ENCODE measurements at regions of chr12 and their contacts with region 1.

Region 1: GRCh38 chr12:15220994-15221885 is at the start of gene RERG:
- DNase-seq: peak; percentile 74
- ATAC-seq: peak; percentile 100
- H3K4me3 Mint-ChIP-seq: peak within 1 kb of the TSS; percentile 53
- H3K27ac Mint-ChIP-seq: no peak within 1 kb of the TSS
- H3K4me1 Mint-ChIP-seq: peaks cover 9% of the 10 kb centered on the region
- H3K27me3 Mint-ChIP-seq: peaks cover 63% of the 10 kb centered on the region
- total RNA-seq, gene RERG: not detected

Region 2: DNA sequence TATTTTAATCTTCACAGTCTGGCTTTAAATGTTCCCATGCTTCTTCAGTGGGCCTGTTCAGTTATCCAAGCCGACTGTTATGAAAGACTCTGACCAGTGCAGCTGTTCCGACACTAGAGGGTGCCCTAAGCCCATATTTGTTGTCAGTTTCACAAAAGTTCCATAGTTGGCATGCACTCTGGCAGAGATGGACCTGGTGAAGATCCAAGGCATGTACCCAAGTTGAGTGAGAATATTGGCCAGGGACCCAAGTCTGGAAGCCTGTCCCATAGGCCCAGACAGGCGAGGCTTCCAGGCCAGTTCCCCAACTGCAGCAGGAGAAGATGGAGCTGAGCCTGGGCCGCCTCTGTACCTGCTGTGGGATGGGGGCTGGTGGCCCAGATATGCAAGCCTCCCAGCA is 497.5 kb before region 1 on chr12:
- CTCF ChIA-PET with region 1: interaction called, 12 read pairs
- DNase-seq: peak; percentile 65
- ATAC-seq: peak; percentile 64
- H3K4me3 Mint-ChIP-seq: no peak overlapping the region
- H3K27ac Mint-ChIP-seq: no peak overlapping the region
- H3K4me1 Mint-ChIP-seq: peaks cover 3% of the 10 kb centered on the region
- H3K27me3 Mint-ChIP-seq: peaks cover 16% of the 10 kb centered on the region

Region 3: GRCh38 chr12:15151161-15152120 is 69.8 kb before region 1 on chr12:
- CTCF ChIA-PET with region 1: interaction called, 12 read pairs
- DNase-seq: no peak
- ATAC-seq: no peak
- H3K4me3 Mint-ChIP-seq: no peak overlapping the region
- H3K27ac Mint-ChIP-seq: no peak overlapping the region
- H3K4me1 Mint-ChIP-seq: no peaks in the 10 kb centered on the region
- H3K27me3 Mint-ChIP-seq: peaks cover 8% of the 10 kb centered on the region

Region 4: GRCh38 chr12:15172060-15172822 is 49.0 kb before region 1 on chr12:
- CTCF ChIA-PET with region 1: interaction called, 10 read pairs
- DNase-seq: no peak
- ATAC-seq: no peak
- H3K4me3 Mint-ChIP-seq: no peak overlapping the region
- H3K27ac Mint-ChIP-seq: no peak overlapping the region
- H3K4me1 Mint-ChIP-seq: no peaks in the 10 kb centered on the region
- H3K27me3 Mint-ChIP-seq: peaks cover 32% of the 10 kb centered on the region

Region 5: DNA sequence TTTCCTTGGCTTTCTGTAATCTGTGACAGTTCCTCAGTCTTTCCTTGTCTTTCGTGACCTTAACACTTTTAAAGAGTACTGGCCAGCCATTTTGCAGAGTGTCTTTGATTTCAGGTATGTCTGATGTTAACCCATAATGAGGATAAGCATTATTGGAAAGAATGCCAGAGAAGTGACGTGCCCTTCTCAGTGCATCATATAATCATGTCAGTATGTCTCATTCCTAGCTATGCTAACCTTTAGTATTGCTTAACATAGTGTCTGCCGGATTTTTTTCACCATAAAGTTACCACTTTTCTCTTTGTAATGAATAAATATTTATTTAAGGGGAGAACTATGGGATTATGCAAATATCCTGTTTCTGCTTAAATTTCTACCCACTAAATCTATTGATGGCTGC is 28.5 kb before region 1 on chr12:
- CTCF ChIA-PET with region 1: interaction called, 19 read pairs
- DNase-seq: no peak
- ATAC-seq: no peak
- H3K4me3 Mint-ChIP-seq: no peak overlapping the region
- H3K27ac Mint-ChIP-seq: no peak overlapping the region
- H3K4me1 Mint-ChIP-seq: no peaks in the 10 kb centered on the region
- H3K27me3 Mint-ChIP-seq: peaks cover 17% of the 10 kb centered on the region

Region 6: GRCh38 chr12:15276088-15276698 is 55.0 kb after region 1 on chr12:
- CTCF ChIA-PET with region 1: interaction called, 13 read pairs
- DNase-seq: no peak
- ATAC-seq: no peak
- H3K4me3 Mint-ChIP-seq: no peak overlapping the region
- H3K27ac Mint-ChIP-seq: no peak overlapping the region
- H3K4me1 Mint-ChIP-seq: peaks cover 16% of the 10 kb centered on the region
- H3K27me3 Mint-ChIP-seq: peaks cover 2% of the 10 kb centered on the region

Region 7: GRCh38 chr12:15364221-15365160 is 143.3 kb after region 1 on chr12:
- CTCF ChIA-PET with region 1: no interaction called
- DNase-seq: no peak
- ATAC-seq: no peak
- H3K4me3 Mint-ChIP-seq: no peak overlapping the region
- H3K27ac Mint-ChIP-seq: no peak overlapping the region
- H3K4me1 Mint-ChIP-seq: no peaks in the 10 kb centered on the region
- H3K27me3 Mint-ChIP-seq: peaks cover 11% of the 10 kb centered on the region